MCF 10A (cell line): ENCODE measurements at regions of chr13 and their contacts with region 1.

Region 1: GRCh38 chr13:39942552-39943273 is 287.3 kb downstream of the COG6 start:
- DNase-seq: peak; percentile 95
- H3K4me3 Mint-ChIP-seq: no peak overlapping the region
- H3K27ac Mint-ChIP-seq: peak overlapping the region; percentile 88
- H3K4me1 Mint-ChIP-seq: peaks cover 21% of the 10 kb centered on the region
- H3K27me3 Mint-ChIP-seq: no peaks in the 10 kb centered on the region
- CTCF ChIP-seq: peak; percentile 98

Region 2: GRCh38 chr13:39688699-39689405 is 253.9 kb before region 1 on chr13:
- CTCF ChIA-PET with region 1: no interaction called
- POLR2A ChIA-PET with region 1: no interaction called
- intact Hi-C with region 1: no loop called
- DNase-seq: no peak
- H3K4me3 Mint-ChIP-seq: no peak overlapping the region
- H3K27ac Mint-ChIP-seq: no peak overlapping the region
- H3K4me1 Mint-ChIP-seq: no peaks in the 10 kb centered on the region
- H3K27me3 Mint-ChIP-seq: no peaks in the 10 kb centered on the region
- CTCF ChIP-seq: no peak

Region 3: GRCh38 chr13:39783050-39783449 is 159.7 kb before region 1 on chr13:
- CTCF ChIA-PET with region 1: interaction called, 13 read pairs
- POLR2A ChIA-PET with region 1: no interaction called
- intact Hi-C with region 1: no loop called
- DNase-seq: peak; percentile 36
- H3K4me3 Mint-ChIP-seq: no peak overlapping the region
- H3K27ac Mint-ChIP-seq: no peak overlapping the region
- H3K4me1 Mint-ChIP-seq: peaks cover 6% of the 10 kb centered on the region
- H3K27me3 Mint-ChIP-seq: no peaks in the 10 kb centered on the region
- CTCF ChIP-seq: peak; percentile 40

Region 4: DNA sequence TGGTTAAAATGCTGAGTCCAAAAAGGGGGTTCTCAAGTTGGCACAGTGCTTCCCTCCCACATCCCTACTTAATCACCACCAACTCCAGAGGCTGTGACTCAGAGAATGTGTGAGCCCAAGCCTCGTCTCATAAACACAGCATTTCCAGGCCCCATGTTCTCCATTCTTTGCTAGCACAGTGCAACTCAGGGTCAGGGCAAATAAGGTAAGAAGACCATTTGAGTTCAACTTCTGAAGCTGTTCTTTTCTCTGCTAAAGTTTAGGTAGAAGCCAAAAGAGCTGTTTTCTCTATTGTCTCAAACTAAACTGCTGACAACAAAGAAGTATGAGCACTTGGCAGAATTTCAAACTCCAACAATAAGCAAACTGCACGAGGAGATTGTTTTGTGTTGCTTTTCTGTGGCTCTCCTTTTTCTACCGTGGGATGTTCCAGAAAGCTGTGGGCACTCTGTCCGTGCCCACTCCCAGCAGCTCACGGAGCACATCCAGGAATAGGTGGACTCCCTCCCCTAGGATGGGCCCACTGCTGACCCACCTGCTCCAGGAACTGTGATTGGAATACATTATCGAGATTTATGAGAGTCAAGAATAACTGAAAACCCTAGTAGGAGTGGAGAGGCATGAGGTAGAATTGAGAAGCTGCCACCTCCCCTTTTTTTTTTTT is 207.0 kb after region 1 on chr13:
- CTCF ChIA-PET with region 1: no interaction called
- POLR2A ChIA-PET with region 1: no interaction called
- intact Hi-C with region 1: loop called (anchors 1 kb)
- DNase-seq: peak; percentile 90
- H3K4me3 Mint-ChIP-seq: no peak overlapping the region
- H3K27ac Mint-ChIP-seq: peak overlapping the region; percentile 94
- H3K4me1 Mint-ChIP-seq: peaks cover 50% of the 10 kb centered on the region
- H3K27me3 Mint-ChIP-seq: no peaks in the 10 kb centered on the region
- CTCF ChIP-seq: no peak

Region 5: DNA sequence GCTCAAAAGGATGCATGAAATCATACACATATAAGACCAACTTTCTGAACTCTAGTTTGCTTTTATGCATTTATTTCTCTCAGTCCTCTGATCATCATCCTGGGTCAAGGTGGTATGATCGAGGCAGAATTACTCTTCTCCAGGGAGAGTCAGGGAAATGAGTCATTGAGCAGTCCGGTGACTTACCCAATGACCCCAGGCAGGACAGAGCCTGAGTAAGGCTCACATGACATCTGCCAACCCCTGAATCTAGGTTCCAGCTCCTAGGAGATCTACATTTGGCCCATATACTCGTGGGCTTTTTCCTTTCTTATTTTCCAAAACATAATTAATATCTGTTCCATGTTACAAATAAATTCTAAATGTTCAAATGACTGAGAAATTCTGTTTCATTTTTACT is 221.4 kb after region 1 on chr13:
- CTCF ChIA-PET with region 1: no interaction called
- POLR2A ChIA-PET with region 1: no interaction called
- intact Hi-C with region 1: no loop called
- DNase-seq: peak; percentile 77
- H3K4me3 Mint-ChIP-seq: no peak overlapping the region
- H3K27ac Mint-ChIP-seq: peak overlapping the region; percentile 49
- H3K4me1 Mint-ChIP-seq: peaks cover 19% of the 10 kb centered on the region
- H3K27me3 Mint-ChIP-seq: no peaks in the 10 kb centered on the region
- CTCF ChIP-seq: no peak

Region 6: GRCh38 chr13:40344270-40345148 is 401.8 kb after region 1 on chr13:
- CTCF ChIA-PET with region 1: interaction called, 4 read pairs
- POLR2A ChIA-PET with region 1: no interaction called
- intact Hi-C with region 1: loop called (anchors 1 kb)
- DNase-seq: no peak
- H3K4me3 Mint-ChIP-seq: no peak overlapping the region
- H3K27ac Mint-ChIP-seq: no peak overlapping the region
- H3K4me1 Mint-ChIP-seq: peaks cover 29% of the 10 kb centered on the region
- H3K27me3 Mint-ChIP-seq: no peaks in the 10 kb centered on the region
- CTCF ChIP-seq: no peak

Region 7: DNA sequence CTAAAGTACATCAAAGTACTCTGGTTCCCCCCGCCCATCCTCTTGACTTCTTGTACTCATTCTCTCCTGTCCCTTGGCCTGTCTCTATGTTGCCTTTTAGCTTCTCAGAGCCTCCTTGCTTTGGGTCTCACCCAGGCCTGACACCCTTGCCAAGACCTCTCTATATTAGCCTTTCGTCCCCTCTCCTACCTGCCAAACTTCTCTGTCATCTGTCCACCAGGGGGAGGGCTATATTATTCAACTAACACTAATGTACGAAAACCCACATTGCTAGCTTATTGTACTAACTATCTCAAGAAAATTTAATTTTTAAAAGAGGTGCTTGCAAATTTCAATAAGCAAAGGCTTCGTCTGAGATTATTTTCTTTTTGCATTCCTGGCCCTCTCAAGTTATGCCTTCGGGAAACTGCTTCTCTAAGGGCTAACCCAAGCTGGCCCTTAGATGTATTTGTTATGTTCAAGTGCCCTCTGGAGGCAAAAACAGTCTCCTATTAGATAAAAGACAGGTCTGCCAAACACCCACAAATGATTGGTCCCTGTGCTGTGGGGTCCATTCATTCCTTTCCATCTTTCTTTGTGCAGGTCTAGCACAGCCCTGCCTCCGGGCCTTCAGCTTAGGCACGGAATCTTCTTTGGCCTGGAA is 834.6 kb after region 1 on chr13:
- CTCF ChIA-PET with region 1: no interaction called
- POLR2A ChIA-PET with region 1: no interaction called
- intact Hi-C with region 1: loop called (anchors 5 kb)
- DNase-seq: peak; percentile 81
- H3K4me3 Mint-ChIP-seq: peak overlapping the region; percentile 34
- H3K27ac Mint-ChIP-seq: peak overlapping the region; percentile 73
- H3K4me1 Mint-ChIP-seq: peaks cover 21% of the 10 kb centered on the region
- H3K27me3 Mint-ChIP-seq: no peaks in the 10 kb centered on the region
- CTCF ChIP-seq: peak; percentile 77